ENCODE measurements at regions of chr9 and their contacts with region 1.

Region 1: GRCh38 chr9:127519301-127520166 is 68.2 kb downstream of the LRSAM1 start:
- DNase-seq: peak in 1 of 2 donors; percentile 51
- ATAC-seq: peak; percentile 26 to 70 (median 54)
- H3K4me3 ChIP-seq: no peak overlapping the region
- H3K27ac ChIP-seq: peak overlapping the region in 9 of 10 donors; percentile 75 to 97 (median 91)
- H3K4me1 ChIP-seq: peaks cover 12 to 63% (median 45%) of the 10 kb centered on the region in 9 donors
- H3K27me3 ChIP-seq: no peaks in the 10 kb centered on the region
- CTCF ChIP-seq: no peak

Region 2: DNA sequence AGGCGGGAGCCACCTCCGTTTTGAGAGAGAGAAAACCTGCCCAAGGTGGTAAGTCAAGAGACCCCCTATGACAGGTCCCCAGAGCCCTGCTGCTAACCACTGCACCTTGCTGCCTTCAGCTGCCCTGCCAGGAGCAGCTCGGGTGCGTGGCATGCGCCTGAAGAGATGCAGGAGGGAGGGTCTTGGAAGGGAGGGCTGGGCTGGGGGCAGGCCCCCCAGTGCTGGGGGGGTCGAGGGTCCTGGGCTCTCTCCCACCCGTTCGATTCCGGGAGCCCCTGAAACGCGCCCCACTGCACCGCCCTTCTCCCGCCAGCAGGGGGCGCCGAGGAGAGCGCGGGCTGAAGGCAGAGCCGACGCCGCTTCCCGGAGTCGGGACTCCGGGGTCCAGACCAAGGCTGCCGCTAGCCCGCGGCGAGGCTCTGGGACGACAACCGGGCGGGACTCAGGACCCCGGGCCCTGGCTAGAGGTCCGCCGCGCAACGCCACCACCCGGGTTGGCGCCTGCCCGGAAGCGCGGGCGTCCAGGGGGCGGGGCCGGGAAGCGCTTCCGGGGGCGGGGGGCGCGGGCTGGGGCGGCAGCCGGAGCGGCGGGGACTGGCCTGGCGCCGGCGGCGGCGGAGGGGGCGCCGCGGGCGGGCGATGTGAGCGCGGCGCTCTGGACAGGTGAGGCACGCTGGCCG is 659.3 kb before region 1 on chr9 and contains the start of gene ZBTB34:
- intact Hi-C with region 1: no loop called
- DNase-seq: peak; percentile 49 to 73
- ATAC-seq: peak; percentile 74 to 91 (median 82)
- H3K4me3 ChIP-seq: peak within 1 kb of the TSS; percentile 80 to 97 (median 95)
- H3K27ac ChIP-seq: peak within 1 kb of the TSS; percentile 91 to 99 (median 94)
- H3K4me1 ChIP-seq: peaks cover 4 to 39% (median 33%) of the 10 kb centered on the region in 9 donors
- H3K27me3 ChIP-seq: no peaks in the 10 kb centered on the region
- CTCF ChIP-seq: peak; percentile 100
- total RNA-seq, gene ZBTB34: 4.2 to 6.5 (median 5.3) TPM

Region 3: DNA sequence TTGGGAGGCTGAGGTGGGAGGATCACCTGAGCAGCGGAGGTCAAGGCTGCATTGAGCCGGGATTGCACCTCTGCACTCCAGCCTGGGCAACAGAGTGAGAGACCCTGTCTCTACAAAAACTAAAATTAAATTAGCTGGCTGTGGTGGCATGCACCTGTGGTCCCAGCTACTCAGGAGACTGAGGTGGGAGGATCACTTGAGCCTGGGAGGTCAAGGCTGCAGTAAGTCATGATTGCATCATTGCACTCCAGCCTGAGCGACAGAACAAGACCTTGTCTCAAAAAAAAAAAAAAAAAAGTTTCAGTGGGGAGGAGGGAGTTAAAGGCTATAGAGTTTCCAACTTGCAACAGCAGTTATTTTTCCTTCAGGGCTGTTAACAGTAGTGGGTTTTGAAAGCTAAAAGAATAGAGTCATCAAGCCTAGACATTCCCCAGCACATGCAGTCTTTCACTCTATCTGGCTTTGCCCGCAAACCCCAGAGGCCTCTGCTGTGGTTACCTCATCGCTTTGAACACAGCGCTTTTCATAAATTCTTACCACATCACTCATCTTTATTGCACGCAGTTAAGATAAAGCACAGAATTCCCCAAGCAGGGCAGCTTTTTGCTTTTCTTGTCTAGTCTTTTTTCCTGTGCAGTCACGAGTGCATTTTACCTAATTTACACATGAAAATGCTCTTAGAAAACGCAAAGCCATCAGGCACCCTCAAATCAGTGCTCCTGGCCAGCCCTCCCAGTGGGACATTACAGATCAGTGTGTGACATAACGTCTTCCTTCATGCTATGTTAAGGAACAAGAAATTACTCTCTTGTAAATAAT is 131.3 kb before region 1 on chr9:
- intact Hi-C with region 1: no loop called
- DNase-seq: no peak
- ATAC-seq: peak; percentile 46 to 97 (median 72)
- H3K4me3 ChIP-seq: no peak overlapping the region
- H3K27ac ChIP-seq: no peak overlapping the region
- H3K4me1 ChIP-seq: peaks cover 0 to 17% (median 0%) of the 10 kb centered on the region in 9 donors
- H3K27me3 ChIP-seq: no peaks in the 10 kb centered on the region
- CTCF ChIP-seq: no peak

Region 4: GRCh38 chr9:127554966-127555767 is 35.6 kb after region 1 on chr9:
- intact Hi-C with region 1: loop called in 1 of 10 experiments (anchors 5 kb)
- DNase-seq: no peak
- ATAC-seq: no peak
- H3K4me3 ChIP-seq: peak overlapping the region in 1 of 10 donors; percentile 2
- H3K27ac ChIP-seq: peak overlapping the region in 9 of 10 donors; percentile 39 to 90 (median 75)
- H3K4me1 ChIP-seq: peaks cover 25 to 91% (median 76%) of the 10 kb centered on the region in 9 donors
- H3K27me3 ChIP-seq: no peaks in the 10 kb centered on the region
- CTCF ChIP-seq: no peak

Region 5: DNA sequence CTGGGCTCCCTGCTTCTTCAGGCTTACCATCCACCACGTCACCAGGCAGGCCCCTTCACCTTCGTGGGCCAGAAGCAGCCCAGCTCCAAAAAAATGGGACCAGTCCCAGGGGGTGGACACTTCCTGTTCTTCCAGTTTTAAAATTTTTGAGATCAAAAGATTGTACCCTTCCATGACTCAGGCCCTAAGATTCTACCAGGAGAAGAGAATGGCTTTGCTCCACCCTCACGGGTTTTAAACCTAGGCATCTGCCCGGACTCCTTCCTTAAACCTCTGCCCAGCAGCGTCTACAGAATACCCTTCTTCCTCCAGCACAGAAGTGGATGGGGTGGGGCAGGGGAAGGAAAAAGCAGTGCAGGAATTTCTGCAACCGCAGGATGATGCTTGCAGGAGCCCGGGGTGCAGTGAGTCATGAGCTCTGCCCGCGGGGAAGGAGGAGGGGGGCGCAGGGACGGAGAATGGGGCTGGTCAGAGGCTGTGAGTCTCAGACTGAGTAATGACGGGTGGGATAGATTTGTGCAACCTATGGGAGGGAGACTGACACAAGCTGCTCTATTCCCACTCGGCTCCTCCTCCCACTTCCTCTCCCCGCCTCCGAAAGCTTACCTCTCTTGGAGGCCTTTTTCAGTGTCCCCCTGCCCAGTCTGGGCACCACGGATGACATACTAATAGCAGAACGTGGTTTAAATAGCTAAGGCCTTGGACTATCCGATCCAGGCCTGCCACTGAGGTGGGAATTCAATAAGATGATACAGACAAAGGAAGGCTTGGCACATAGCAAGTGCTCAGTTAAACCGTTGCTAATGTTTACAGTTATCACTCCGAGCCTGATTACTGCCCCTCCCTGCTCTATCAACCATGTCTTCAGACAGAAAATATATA is 42.3 kb after region 1 on chr9:
- intact Hi-C with region 1: loop called in 2 of 10 experiments (anchors 5 kb)
- DNase-seq: peak; percentile 72 to 78
- ATAC-seq: peak; percentile 54 to 85 (median 78)
- H3K4me3 ChIP-seq: peak overlapping the region in 1 of 10 donors; percentile 7
- H3K27ac ChIP-seq: peak overlapping the region in 9 of 10 donors; percentile 46 to 90 (median 83)
- H3K4me1 ChIP-seq: peaks cover 34 to 93% (median 78%) of the 10 kb centered on the region in 9 donors
- H3K27me3 ChIP-seq: no peaks in the 10 kb centered on the region
- CTCF ChIP-seq: no peak

Region 6: GRCh38 chr9:127568971-127569885 is 49.7 kb after region 1 on chr9:
- intact Hi-C with region 1: loop called in 2 of 10 experiments (anchors 5 kb)
- DNase-seq: peak; percentile 79 to 87
- ATAC-seq: peak; percentile 89 to 92 (median 90)
- H3K4me3 ChIP-seq: peak overlapping the region; percentile 55 to 93 (median 88)
- H3K27ac ChIP-seq: peak overlapping the region; percentile 81 to 96 (median 94)
- H3K4me1 ChIP-seq: peaks cover 4 to 67% (median 37%) of the 10 kb centered on the region in 9 donors
- H3K27me3 ChIP-seq: peaks cover 0 to 8% (median 0%) of the 10 kb centered on the region in 7 donors
- CTCF ChIP-seq: no peak

Region 7: DNA sequence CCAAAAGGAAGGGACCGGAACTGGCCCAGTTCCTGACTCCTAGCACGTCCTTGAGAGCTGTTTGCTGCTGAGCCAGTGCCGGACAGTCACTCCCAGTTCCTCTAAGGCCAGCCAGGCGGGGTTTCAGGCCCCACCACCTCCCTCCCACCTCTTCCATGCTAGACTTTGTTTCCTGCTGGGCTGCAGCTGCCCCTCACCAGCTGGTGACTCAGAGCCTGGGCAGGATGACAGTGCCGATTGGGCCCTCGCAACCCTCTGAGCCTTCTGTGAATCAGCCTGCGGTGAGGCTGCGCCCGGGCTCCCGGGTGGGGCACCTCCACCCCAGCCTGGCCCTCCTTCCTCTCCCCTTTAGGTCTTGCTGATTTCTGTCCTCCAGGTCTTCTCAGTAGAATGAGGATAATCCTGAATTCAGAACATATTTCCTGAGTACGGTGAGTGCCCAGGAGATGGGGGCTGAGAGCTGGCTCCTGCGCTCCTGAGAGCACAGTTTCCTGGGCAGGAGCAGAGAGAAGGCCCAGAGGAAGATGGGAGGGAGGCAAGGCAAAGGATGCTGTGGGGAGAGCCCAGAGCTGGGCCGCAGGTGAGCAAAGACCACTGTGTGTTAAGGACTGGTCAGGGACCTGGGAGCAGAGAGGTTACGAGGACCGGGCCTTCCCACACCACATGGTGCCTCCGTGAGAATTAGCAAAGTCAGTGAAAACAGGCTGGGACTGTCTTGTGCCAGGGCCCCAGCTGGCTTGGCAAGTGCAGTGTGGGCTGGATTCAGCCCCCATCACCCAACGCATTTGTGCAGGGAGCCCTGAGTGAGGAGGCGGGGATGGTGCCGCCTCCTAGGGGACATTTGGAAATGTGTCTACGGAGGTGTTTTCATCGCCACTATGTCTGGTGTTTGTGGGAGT is 59.7 kb after region 1 on chr9:
- intact Hi-C with region 1: loop called in 1 of 10 experiments (anchors 5 kb)
- DNase-seq: peak; percentile 83 to 85
- ATAC-seq: peak; percentile 92 to 96 (median 94)
- H3K4me3 ChIP-seq: peak overlapping the region in 8 of 10 donors; percentile 12 to 46 (median 30)
- H3K27ac ChIP-seq: peak overlapping the region; percentile 47 to 92 (median 85)
- H3K4me1 ChIP-seq: peaks cover 10 to 58% (median 17%) of the 10 kb centered on the region in 9 donors
- H3K27me3 ChIP-seq: no peaks in the 10 kb centered on the region
- CTCF ChIP-seq: peak in 7 of 9 donors; percentile 28 to 51 (median 32)

Region 8: GRCh38 chr9:128001779-128002298 is 482.3 kb after region 1 on chr9:
- intact Hi-C with region 1: no loop called
- DNase-seq: no peak
- ATAC-seq: no peak
- H3K4me3 ChIP-seq: no peak overlapping the region
- H3K27ac ChIP-seq: peak overlapping the region in 4 of 10 donors; percentile 0 to 72 (median 42)
- H3K4me1 ChIP-seq: peaks cover 2 to 34% (median 21%) of the 10 kb centered on the region in 9 donors
- H3K27me3 ChIP-seq: no peaks in the 10 kb centered on the region
- CTCF ChIP-seq: no peak

Region 9: GRCh38 chr9:128495799-128496417 is 976.4 kb after region 1 on chr9:
- intact Hi-C with region 1: loop called in 1 of 10 experiments (anchors 5 kb)
- DNase-seq: no peak
- ATAC-seq: no peak
- H3K4me3 ChIP-seq: no peak overlapping the region
- H3K27ac ChIP-seq: no peak overlapping the region
- H3K4me1 ChIP-seq: peaks cover 0 to 20% (median 12%) of the 10 kb centered on the region in 9 donors
- H3K27me3 ChIP-seq: no peaks in the 10 kb centered on the region
- CTCF ChIP-seq: no peak

Measured in heart right ventricle (tissue), 16 donors.